ENCODE measurements at regions of chr13 and their contacts with region 1.

Region 1: DNA sequence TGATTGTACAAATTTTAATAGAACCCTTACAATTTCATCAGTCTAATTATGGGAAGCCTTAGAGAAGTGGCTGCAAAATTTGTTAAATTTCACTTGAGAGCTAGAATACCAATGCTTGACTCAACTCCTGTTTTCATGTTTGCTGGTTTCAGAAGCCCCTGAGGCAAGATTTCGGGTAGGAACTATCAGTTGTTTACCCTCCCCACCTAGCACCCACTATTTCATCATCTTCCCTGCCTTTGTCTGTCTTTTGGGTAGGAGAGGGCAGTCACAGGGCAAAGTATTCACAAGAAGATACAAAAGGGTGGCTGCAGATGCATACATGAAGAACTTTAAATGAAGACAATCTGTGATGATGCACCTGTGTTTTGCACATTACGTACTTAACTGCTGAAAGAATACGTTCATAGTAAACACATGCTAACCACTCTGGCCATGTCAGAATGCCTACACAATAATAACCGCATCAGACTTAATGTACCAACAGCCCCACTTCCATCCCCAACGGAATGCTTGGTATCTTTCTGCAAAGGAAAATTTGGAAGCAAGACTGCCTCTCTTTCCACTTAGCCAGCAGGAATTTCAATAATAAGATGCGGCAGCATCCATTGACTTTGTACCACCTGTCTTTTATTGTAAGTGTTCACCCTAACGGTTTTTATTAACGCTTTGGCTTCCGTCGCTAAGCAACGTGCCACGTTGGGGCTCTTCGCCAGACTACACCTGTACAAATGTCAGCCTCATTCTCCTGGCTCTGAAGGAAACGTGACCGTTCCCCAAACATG is 30.4 kb downstream of the TPT1 start:
- DNase-seq: no peak
- H3K4me3 Mint-ChIP-seq: peak overlapping the region; percentile 79
- H3K27ac Mint-ChIP-seq: no peak overlapping the region
- H3K4me1 Mint-ChIP-seq: peaks cover 20% of the 10 kb centered on the region
- H3K27me3 Mint-ChIP-seq: peaks cover 8% of the 10 kb centered on the region

Region 2: GRCh38 chr13:44917589-44918325 is 392.8 kb before region 1 on chr13:
- CTCF ChIA-PET with region 1: no interaction called
- intact Hi-C with region 1: loop called (anchors 1 kb)
- DNase-seq: peak; percentile 97
- H3K4me3 Mint-ChIP-seq: no peak overlapping the region
- H3K27ac Mint-ChIP-seq: no peak overlapping the region
- H3K4me1 Mint-ChIP-seq: peaks cover 3% of the 10 kb centered on the region
- H3K27me3 Mint-ChIP-seq: no peaks in the 10 kb centered on the region

Region 3: DNA sequence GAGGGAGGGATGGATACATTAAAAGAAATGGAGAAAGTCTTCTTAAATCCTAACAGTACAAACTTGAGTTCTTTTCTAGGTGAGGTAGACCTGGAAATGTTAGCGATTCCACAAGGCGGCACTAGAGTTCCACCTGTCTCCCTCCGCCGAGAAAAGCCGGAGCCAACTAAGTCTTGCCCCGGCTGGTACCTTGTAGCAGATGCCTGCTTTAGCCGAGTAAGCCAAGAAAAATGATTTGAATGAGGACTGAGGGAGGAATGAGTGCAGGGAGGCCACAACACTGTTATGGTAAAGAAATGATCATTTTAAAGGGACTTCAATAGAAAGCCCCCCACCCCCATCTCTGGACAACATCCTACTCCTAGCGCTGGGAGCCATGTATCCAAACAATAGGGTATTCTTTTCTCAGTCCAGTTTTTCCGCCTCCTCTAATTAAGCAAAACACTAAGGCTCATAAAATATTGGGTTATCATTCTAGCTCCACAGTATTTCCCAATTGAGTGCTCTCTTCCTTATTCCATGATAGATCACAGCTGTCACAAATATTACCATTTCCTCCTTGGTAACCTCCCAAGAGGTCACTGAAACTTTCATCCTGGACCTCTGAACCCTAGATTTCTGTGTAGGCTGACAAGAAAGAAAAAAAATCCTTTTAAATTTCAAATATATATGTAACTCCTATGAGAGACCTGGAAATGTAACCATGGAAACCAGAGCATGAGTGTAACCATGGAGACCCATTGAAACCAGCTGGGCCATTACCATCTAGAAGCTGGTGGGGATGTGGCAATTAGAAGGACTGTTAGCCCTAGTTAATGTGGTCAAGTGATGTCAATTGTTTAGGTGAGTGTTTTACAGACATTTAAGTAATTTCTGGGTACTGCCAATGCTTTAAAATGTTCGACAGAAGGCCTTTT is 262.9 kb before region 1 on chr13:
- CTCF ChIA-PET with region 1: interaction called, 132 read pairs
- intact Hi-C with region 1: loop called (anchors 1 kb)
- DNase-seq: peak; percentile 91
- H3K4me3 Mint-ChIP-seq: peak overlapping the region; percentile 65
- H3K27ac Mint-ChIP-seq: no peak overlapping the region
- H3K4me1 Mint-ChIP-seq: peaks cover 21% of the 10 kb centered on the region
- H3K27me3 Mint-ChIP-seq: peaks cover 25% of the 10 kb centered on the region

Region 4: DNA sequence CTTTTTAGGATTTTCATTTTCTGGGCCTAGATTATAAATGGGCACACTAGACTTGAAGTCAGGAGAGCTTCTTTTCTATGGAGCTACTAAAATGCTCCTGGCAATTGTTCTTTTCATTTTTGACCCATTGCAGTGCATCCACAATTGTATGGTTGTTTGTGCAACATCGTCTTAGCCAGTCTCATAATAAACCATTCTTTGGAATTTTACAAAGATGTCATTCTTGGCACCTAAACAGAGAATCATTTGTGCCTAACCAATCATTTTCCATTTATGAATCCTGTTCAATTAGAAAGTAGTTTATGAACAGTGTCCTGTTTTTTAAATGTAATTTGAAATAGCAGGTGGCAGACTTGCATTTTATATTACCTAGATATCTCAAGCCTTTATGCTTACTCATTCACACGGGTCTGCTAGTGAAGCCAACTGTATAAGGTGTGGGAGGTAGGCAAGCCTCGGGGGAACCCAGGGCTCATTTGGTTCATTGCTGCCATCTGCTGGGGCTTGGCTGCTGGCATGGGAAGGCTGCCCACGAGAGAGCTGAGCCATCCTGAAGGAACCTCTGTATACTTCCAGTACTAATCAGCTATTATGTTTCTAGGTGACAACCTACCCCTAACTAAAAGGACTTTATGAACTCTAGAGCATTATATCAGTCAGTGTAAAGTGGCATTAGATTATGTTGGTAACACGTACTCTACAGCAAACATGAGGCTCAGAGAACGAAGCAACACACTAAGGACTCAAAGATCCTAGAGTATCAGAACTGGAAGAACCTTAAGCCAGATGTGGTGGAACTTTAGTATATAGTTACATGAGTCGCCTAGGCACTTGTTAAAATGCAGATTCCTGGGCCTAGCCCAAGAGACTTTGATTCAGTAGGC is 29.5 kb before region 1 on chr13:
- CTCF ChIA-PET with region 1: interaction called, 4 read pairs
- intact Hi-C with region 1: loop called (anchors 1 kb)
- DNase-seq: peak; percentile 79
- H3K4me3 Mint-ChIP-seq: no peak overlapping the region
- H3K27ac Mint-ChIP-seq: no peak overlapping the region
- H3K4me1 Mint-ChIP-seq: peaks cover 5% of the 10 kb centered on the region
- H3K27me3 Mint-ChIP-seq: no peaks in the 10 kb centered on the region

Region 5: DNA sequence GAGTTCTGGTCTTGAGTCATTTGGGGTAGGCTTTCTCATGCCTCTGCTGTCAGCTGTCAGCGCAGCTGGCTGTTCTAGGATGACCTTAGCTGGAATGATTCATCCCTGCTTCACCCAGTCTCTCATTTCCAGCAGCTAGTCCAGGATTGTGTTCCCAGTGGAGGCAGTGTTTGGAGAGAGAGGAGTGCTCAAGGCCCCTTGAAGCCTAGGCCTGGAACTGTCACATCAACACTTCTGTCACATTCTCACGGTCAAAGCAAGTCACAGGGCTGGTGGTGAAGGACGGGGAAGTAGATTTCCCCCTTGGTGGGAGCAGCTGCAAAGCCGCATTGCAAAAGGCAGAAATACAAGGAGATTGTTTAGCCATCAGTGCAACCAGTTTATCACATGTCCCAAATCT is 15.3 kb after region 1 on chr13:
- CTCF ChIA-PET with region 1: interaction called, 10 read pairs
- intact Hi-C with region 1: no loop called
- DNase-seq: no peak
- H3K4me3 Mint-ChIP-seq: no peak overlapping the region
- H3K27ac Mint-ChIP-seq: no peak overlapping the region
- H3K4me1 Mint-ChIP-seq: peaks cover 34% of the 10 kb centered on the region
- H3K27me3 Mint-ChIP-seq: no peaks in the 10 kb centered on the region

Region 6: GRCh38 chr13:45393941-45394570 is 83.5 kb after region 1 on chr13:
- CTCF ChIA-PET with region 1: interaction called, 3 read pairs
- intact Hi-C with region 1: loop called (anchors 1 kb)
- DNase-seq: peak; percentile 61
- H3K4me3 Mint-ChIP-seq: no peak overlapping the region
- H3K27ac Mint-ChIP-seq: no peak overlapping the region
- H3K4me1 Mint-ChIP-seq: peaks cover 47% of the 10 kb centered on the region
- H3K27me3 Mint-ChIP-seq: no peaks in the 10 kb centered on the region

Measured in activated naive CD4-positive, alpha-beta T cell treated with anti-CD3 and anti-CD28 coated beads for 36 hours (primary cell).